Left colon (tissue), 2 donors: ENCODE measurements at regions of chr11 and their contacts with region 1.

Region 1: GRCh38 chr11:2196970-2197770 is 25.6 kb upstream of the TH start:
- DNase-seq: peak; percentile 58 to 84
- ATAC-seq: peak; percentile 75

Region 2: GRCh38 chr11:2151500-2152257 is 45.5 kb before region 1 on chr11:
- intact Hi-C with region 1: no loop called
- DNase-seq: peak; percentile 60 to 84
- ATAC-seq: peak; percentile 77

Region 3: DNA sequence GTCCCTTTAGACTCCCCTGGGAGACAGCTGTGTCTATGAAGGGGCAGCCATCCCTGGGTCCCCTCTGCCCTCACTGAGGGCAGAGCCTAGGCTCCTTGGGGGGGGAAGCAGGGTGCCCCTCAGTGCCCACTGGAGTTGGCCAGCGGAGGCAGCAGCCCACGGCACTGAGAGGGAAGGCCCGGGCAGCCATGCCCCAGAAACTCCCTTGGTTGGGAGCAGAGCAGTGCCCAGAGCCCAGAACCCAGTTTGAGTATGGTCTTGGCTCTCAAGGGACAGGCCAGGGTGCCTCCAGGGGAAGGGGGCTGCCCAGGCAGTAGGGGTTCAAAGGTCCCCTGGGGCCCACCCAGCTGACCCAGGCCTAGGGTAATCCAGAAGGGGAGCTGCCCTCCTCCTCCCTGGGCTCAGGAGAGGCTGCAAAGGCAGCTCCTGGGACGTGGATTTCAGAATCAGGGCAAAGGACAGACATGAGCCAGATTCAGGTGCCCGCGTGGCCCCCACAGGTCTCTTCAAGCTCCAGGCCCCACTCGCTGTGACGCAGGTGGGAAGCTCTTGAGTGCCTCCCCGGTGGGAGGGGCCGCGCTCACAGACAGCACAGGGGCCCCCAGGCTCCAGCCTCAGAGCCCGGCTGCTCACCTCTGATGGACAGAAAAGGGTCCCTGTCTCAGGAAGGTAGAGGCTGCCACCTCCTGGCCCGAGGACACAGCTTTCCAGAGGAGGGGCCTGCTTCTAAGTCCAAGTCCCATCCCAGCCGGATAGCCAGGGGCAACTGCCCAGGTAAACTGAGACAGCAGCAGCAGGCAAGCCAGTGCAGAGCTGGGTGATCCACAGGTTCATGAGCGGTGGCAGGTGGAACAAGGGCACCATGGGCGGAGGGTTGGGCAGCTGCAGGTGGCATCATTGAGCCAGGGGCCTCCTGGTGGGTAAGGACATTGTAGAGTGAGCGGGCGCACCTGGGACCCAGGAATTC is 101.9 kb after region 1 on chr11:
- intact Hi-C with region 1: loop called in 1 of 2 experiments (anchors 10 kb)
- DNase-seq: peak; percentile 23 to 50
- ATAC-seq: peak; percentile 68

Region 4: DNA sequence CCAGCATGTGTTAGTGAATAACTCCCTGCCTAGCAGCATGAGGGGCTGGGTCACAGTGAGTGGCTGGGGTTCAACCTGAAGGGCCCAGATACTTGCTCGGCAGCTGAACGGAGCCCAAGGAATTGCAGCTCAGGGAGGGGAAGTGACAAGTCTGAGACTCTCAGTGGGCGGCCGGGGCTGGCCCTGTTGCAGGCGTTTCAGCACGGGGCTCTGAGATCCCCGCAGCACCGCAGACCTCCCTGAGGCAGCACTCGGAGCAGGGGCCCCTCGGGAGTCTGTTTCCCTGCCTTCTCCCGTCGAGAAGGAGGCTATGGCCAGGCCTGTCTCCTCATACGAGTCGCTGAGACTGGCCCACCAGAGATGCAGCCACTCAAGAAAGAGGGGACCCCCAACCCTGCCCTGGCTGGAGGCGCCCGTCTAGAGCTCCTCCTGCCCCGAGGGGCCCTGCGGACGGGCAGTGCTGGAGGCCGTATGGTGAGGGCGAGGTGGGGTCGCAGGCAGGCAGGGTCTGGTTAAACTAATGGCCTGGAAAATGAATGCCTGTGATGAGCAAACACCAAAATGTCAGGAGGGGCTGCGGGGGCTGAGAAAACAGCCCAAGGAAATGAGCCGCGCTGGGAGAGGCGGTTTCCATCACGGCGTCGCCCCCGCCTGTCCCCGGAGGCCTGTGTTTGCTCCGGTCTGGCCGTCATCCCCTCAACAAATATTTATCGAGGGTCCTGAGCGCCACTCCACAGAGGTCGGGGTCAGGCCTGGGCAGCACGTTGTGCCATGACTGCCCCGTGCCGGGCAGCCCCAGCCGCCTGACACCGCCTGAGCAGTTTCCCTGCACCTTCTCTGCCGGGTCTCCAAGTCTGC is 212.7 kb after region 1 on chr11:
- intact Hi-C with region 1: loop called in 1 of 2 experiments (anchors 5 kb)
- DNase-seq: no peak
- ATAC-seq: no peak